ENCODE measurements at regions of chr12 and their contacts with region 1.

Region 1: GRCh38 chr12:93025145-93025805 is 96.2 kb upstream of the EEA1 start:
- DNase-seq: no peak
- ATAC-seq: peak in 2 of 4 donors; percentile 43 to 44
- H3K4me3 ChIP-seq: no peak overlapping the region
- H3K27ac ChIP-seq: no peak overlapping the region
- H3K4me1 ChIP-seq: peaks cover 0 to 16% (median 0%) of the 10 kb centered on the region in 12 donors
- H3K27me3 ChIP-seq: no peaks in the 10 kb centered on the region
- CTCF ChIP-seq: peak; percentile 6 to 69 (median 53)
- POLR2A ChIP-seq: no peak

Region 2: DNA sequence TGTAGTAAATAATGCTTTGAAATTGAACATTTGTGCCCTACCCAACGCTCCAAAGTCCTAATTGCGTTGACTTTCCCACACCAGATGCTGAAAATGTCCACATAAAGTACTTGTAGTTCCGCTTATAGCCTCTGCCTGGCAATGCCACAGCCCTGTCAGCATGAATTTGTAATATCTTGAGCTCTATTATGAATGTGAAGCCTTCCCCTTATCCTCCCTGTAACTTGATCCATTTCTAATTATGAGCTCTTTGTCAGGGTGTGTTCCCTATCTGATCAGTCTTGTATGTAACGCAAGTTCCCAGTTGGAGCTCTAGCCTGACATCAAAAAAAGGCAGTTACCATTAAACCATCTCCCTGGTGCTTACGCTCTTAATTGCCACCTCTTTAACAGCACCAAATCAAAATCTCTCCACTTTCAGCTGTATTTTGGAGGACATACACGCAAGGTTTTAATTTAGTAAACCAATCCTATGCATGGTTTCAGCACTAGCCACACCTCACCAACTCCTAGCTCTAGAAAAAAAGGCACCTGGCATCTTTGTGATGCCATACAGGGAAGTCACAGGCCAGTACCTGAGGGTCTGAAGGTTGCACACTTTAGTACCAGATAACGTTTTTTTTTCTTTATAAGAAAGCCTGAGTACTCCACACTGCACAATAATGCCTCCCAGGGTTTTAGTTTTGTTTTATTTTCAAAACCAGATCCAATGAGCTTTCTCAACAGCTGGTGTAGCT is 165.5 kb before region 1 on chr12:
- intact Hi-C with region 1: no loop called
- DNase-seq: no peak
- ATAC-seq: peak in 3 of 4 donors; percentile 42 to 53 (median 48)
- H3K4me3 ChIP-seq: no peak overlapping the region
- H3K27ac ChIP-seq: no peak overlapping the region
- H3K4me1 ChIP-seq: peaks cover 0 to 6% (median 0%) of the 10 kb centered on the region in 12 donors
- H3K27me3 ChIP-seq: no peaks in the 10 kb centered on the region
- CTCF ChIP-seq: no peak
- POLR2A ChIP-seq: no peak

Region 3: GRCh38 chr12:92886131-92886530 is 139.1 kb before region 1 on chr12:
- intact Hi-C with region 1: no loop called
- DNase-seq: no peak
- ATAC-seq: no peak
- H3K4me3 ChIP-seq: no peak overlapping the region
- H3K27ac ChIP-seq: no peak overlapping the region
- H3K4me1 ChIP-seq: peaks cover 0 to under 1% (median 0%) of the 10 kb centered on the region in 12 donors
- H3K27me3 ChIP-seq: no peaks in the 10 kb centered on the region
- CTCF ChIP-seq: no peak
- POLR2A ChIP-seq: no peak

Region 4: GRCh38 chr12:92987362-92987761 is 37.9 kb before region 1 on chr12:
- intact Hi-C with region 1: loop called in 1 of 10 experiments (anchors 5 kb)
- DNase-seq: peak in 1 of 5 donors; percentile 21
- ATAC-seq: peak; percentile 59 to 86 (median 76)
- H3K4me3 ChIP-seq: peak overlapping the region in 1 of 12 donors; percentile 4
- H3K27ac ChIP-seq: peak overlapping the region in 11 of 12 donors; percentile 10 to 79 (median 59)
- H3K4me1 ChIP-seq: peaks cover 0 to 20% (median 6%) of the 10 kb centered on the region in 12 donors
- H3K27me3 ChIP-seq: no peaks in the 10 kb centered on the region
- CTCF ChIP-seq: peak; percentile 40 to 78 (median 64)
- POLR2A ChIP-seq: no peak

Region 5: DNA sequence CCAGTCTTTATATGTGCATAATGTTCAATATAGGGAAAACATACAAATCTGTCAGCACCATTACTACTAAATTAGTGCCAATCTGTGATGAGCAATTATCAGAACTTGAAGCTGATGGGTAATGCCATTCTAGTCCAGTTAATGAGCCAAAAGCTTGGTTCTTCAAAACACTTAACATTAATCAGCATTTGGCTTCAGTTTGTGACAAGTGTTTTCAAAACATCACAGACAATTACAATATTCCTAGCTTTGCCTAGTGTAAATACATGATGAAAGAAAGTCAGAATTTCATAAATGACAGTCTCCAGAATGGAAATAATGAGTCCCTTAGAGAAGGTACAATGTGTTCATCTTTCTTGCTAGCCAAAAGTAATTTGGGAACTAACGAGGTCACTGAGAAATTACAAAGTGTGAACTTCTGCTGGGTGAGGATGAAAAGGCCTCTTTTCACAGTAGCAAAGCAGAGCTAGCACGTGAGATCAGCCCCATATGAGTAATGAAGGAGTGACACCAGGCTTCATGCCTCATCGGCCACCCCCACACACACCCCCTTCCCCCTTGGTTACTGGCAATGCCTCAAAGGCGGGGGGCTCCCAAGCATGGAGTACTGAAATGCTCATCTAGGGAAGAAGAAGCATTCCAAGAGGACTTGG is 84.4 kb after region 1 on chr12:
- intact Hi-C with region 1: loop called in 1 of 10 experiments (anchors 5 kb)
- DNase-seq: no peak
- ATAC-seq: peak in 3 of 4 donors; percentile 7 to 28 (median 20)
- H3K4me3 ChIP-seq: no peak overlapping the region
- H3K27ac ChIP-seq: peak overlapping the region in 6 of 12 donors; percentile 10 to 57 (median 39)
- H3K4me1 ChIP-seq: peaks cover 3 to 48% (median 30%) of the 10 kb centered on the region in 12 donors
- H3K27me3 ChIP-seq: no peaks in the 10 kb centered on the region
- CTCF ChIP-seq: no peak
- POLR2A ChIP-seq: no peak

Region 6: DNA sequence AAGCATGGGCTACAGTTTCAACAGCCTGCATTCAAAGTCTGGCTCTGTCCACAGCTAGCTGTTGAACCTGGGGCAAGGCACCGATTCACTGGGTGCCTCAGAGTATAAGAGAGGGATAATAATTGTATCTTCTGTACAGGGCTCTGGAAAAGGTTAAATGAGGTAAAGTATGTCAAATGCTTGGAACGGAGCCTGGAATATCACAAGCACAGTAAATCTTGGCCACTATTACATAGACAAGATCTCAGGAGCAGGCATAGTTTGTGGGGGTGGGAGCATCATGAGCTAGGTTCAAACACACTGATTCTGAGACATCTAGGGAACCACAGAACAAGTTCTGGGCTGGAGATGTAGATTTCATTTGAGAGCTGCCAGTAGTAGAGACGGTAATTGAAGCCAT is 148.8 kb after region 1 on chr12:
- intact Hi-C with region 1: loop called in 1 of 10 experiments (anchors 5 kb)
- DNase-seq: peak in 3 of 5 donors; percentile 30 to 49 (median 37)
- ATAC-seq: peak; percentile 73 to 85 (median 80)
- H3K4me3 ChIP-seq: no peak overlapping the region
- H3K27ac ChIP-seq: peak overlapping the region; percentile 31 to 89 (median 78)
- H3K4me1 ChIP-seq: peaks cover 0 to 60% (median 38%) of the 10 kb centered on the region in 12 donors
- H3K27me3 ChIP-seq: no peaks in the 10 kb centered on the region
- CTCF ChIP-seq: no peak
- POLR2A ChIP-seq: no peak

Region 7: DNA sequence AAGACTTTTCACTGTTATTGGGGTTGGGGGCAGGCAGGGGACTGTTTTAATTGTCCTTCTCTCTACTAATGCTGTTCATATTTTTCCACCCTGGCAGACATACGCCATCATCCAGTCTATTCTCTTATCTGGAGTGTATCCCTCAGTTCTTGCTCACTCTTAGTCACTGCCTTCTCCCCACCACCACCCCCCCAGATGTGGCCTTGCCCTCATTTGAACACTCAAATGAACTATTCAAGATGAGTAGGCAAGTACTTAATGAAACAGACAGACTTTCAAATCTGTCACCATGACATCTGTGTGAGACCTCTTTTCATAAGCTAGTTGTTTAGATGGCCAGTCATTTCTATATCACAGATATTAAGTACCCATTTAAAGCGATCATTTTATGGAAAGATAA is 362.5 kb after region 1 on chr12:
- intact Hi-C with region 1: loop called in 4 of 10 experiments (anchors 10 kb)
- DNase-seq: no peak
- ATAC-seq: peak in 3 of 4 donors; percentile 15 to 59 (median 46)
- H3K4me3 ChIP-seq: no peak overlapping the region
- H3K27ac ChIP-seq: peak overlapping the region in 4 of 12 donors; percentile 3 to 45 (median 25)
- H3K4me1 ChIP-seq: peaks cover 0 to 80% (median 57%) of the 10 kb centered on the region in 12 donors
- H3K27me3 ChIP-seq: no peaks in the 10 kb centered on the region
- CTCF ChIP-seq: no peak
- POLR2A ChIP-seq: no peak